Ascending aorta (tissue), 2 donors: ENCODE measurements at regions of chr4 and their contacts with region 1.

Region 1: GRCh38 chr4:183471946-183472708 is 27.7 kb downstream of the CDKN2AIP start:
- DNase-seq: peak; percentile 47 to 93
- H3K4me3 ChIP-seq: peak overlapping the region in 1 of 2 donors; percentile 21
- H3K27ac ChIP-seq: no peak overlapping the region
- H3K4me1 ChIP-seq: no peaks in the 10 kb centered on the region
- H3K27me3 ChIP-seq: no peaks in the 10 kb centered on the region
- CTCF ChIP-seq: peak; percentile 59 to 83 (median 81)

Region 2: DNA sequence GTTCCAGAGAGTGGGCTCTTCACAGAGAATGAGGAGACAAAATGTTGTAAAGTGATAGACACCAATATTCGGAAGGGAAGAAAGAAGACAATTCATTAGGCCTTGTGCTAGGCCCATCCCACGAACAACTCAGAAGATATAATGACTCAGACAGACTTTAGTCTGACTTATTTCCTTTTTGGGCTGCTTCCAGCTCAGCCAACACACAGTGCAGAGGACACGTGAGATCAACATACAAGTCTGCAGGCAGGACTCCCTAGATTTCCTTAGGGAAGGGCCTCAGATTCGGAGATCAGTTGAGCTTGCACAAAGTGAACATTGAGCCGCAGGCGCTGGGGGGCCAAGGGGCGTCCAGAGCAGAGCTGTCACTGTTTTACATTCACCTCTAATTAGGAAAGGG is 1519.6 kb before region 1 on chr4:
- intact Hi-C with region 1: no loop called
- DNase-seq: no peak
- H3K4me3 ChIP-seq: no peak overlapping the region
- H3K27ac ChIP-seq: no peak overlapping the region
- H3K4me1 ChIP-seq: no peaks in the 10 kb centered on the region
- H3K27me3 ChIP-seq: no peaks in the 10 kb centered on the region
- CTCF ChIP-seq: no peak

Region 3: DNA sequence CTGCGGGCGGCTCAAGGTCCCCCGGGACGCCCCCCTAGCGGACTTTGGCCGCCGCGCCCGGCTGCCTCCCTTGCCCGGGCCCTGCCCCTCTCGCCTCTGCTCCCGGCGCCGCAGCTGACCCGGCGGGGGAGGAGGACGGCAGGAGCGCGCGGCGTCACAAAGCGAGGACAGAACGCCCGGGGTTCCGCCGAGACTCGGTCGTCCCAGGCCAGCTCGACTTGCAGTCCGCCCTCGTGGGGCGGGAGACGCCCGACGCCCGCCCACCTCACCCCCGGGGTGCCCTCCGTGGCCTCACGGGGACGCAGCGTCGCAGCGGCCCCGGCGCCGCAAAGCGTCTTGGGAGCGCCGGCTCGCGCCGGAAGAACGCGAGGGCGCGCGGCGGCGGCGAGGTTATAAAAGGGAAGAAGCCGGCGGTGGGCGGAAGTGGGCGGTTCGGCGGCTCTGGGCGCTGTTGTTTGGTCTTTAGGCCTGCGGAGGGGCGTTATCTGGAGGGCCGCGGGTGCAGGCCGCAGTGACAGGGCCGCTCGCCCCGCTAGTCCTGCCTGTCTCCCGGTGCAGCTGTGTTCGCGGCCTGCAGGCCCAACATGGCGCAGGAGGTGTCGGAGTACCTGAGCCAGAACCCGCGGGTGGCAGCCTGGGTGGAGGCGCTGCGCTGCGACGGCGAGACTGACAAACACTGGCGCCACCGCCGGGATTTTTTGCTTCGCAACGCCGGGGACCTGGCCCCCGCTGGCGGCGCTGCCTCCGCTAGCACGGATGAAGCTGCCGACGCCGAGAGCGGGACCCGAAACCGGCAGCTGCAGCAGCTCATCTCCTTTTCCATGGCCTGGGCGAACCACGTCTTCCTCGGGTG is 27.7 kb before region 1 on chr4 and contains the start of gene CDKN2AIP:
- intact Hi-C with region 1: loop called (anchors 2 kb)
- DNase-seq: peak; percentile 64 to 96
- H3K4me3 ChIP-seq: peak within 1 kb of the TSS; percentile 89 to 96
- H3K27ac ChIP-seq: peak within 1 kb of the TSS; percentile 95 to 99
- H3K4me1 ChIP-seq: peaks cover 12 to 30% of the 10 kb centered on the region in 2 donors
- H3K27me3 ChIP-seq: no peaks in the 10 kb centered on the region
- CTCF ChIP-seq: peak in 1 of 3 experiments; percentile 17
- total RNA-seq, gene CDKN2AIP: 34.5 TPM

Region 4: GRCh38 chr4:183602557-183603027 is 130.5 kb after region 1 on chr4:
- intact Hi-C with region 1: loop called (anchors 1 kb)
- DNase-seq: no peak
- H3K4me3 ChIP-seq: no peak overlapping the region
- H3K27ac ChIP-seq: no peak overlapping the region
- H3K4me1 ChIP-seq: no peaks in the 10 kb centered on the region
- H3K27me3 ChIP-seq: no peaks in the 10 kb centered on the region
- CTCF ChIP-seq: peak in 1 of 3 experiments; percentile 32

Region 5: GRCh38 chr4:183659029-183659871 is 187.1 kb after region 1 on chr4 and contains the starts of genes RWDD4 and TRAPPC11:
- intact Hi-C with region 1: loop called (anchors 2 kb)
- DNase-seq: peak; percentile 91 to 98
- H3K4me3 ChIP-seq: peak within 1 kb of the TSS; percentile 71 to 98
- H3K27ac ChIP-seq: peak within 1 kb of the TSS; percentile 89 to 90
- H3K4me1 ChIP-seq: peaks cover 3 to 14% of the 10 kb centered on the region in 2 donors
- H3K27me3 ChIP-seq: no peaks in the 10 kb centered on the region
- CTCF ChIP-seq: peak; percentile 38 to 45 (median 45)
- total RNA-seq, gene RWDD4: 38.6 TPM
- total RNA-seq, gene TRAPPC11: 124 TPM

Region 6: GRCh38 chr4:184168406-184169019 is 696.4 kb after region 1 on chr4:
- intact Hi-C with region 1: loop called (anchors 1 kb)
- DNase-seq: peak in 1 of 2 donors; percentile 84
- H3K4me3 ChIP-seq: no peak overlapping the region
- H3K27ac ChIP-seq: no peak overlapping the region
- H3K4me1 ChIP-seq: no peaks in the 10 kb centered on the region
- H3K27me3 ChIP-seq: no peaks in the 10 kb centered on the region
- CTCF ChIP-seq: peak; percentile 89 to 97 (median 93)